B cell (primary cell): ENCODE measurements at regions of chr14 and their contacts with region 1.

Region 1: DNA sequence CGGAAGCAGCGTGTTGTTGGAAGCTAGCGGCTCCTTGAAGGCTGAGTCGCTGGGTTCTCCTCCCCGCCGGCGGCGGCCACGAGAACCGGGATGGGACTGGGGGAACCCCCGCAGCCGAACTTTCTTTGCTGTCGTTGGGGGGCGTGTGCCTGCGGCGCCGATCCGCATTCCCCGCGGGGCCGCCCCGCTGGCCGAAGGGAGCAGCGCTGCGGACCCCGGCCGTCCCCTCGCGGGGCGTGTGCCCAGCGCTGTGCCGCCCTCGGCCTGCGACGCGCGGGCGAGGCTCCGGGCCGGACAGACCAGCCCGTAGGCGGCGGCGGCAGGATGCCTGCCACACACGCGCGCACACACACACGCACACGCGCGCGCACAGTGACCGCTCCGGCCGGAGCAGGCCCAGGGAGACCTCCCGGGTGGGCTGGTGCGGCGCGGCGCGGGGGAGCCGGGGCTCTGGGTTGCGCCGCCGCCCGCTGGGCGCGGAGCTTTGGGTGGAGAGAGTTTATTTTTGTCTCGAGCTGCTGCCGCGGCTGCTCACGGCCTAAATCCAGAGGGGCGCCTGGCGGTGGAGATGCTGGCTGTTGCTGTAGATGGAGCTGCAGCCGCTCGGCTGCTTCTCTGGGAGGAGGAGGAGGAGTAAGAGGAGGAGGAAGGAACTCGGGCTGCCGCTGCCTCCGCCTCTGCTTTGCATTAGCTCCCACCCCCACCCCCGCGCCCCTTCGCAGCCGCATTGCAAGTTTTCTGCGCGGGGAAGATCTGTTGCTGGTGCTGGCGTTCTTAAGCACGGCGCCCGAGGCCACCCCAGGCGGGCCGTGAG is at the start of gene SAMD4A:
- DNase-seq: peak; percentile 85
- ATAC-seq: peak; percentile 35
- H3K4me3 ChIP-seq: peak within 1 kb of the TSS; percentile 52 to 86 (median 73)
- H3K4me3 Mint-ChIP-seq: peak within 1 kb of the TSS; percentile 96
- H3K27ac ChIP-seq: peak within 1 kb of the TSS; percentile 73 to 85
- H3K27ac Mint-ChIP-seq: peak within 1 kb of the TSS; percentile 96
- H3K4me1 ChIP-seq: peaks cover 21 to 24% of the 10 kb centered on the region in 2 donors
- H3K4me1 Mint-ChIP-seq: peaks cover 27% of the 10 kb centered on the region
- H3K27me3 ChIP-seq: no peaks in the 10 kb centered on the region
- H3K27me3 Mint-ChIP-seq: peaks cover 3% of the 10 kb centered on the region
- CTCF ChIP-seq: peak; percentile 10
- total RNA-seq, gene SAMD4A: 12.7 and 13.7 TPM in 2 replicates

Region 2: DNA sequence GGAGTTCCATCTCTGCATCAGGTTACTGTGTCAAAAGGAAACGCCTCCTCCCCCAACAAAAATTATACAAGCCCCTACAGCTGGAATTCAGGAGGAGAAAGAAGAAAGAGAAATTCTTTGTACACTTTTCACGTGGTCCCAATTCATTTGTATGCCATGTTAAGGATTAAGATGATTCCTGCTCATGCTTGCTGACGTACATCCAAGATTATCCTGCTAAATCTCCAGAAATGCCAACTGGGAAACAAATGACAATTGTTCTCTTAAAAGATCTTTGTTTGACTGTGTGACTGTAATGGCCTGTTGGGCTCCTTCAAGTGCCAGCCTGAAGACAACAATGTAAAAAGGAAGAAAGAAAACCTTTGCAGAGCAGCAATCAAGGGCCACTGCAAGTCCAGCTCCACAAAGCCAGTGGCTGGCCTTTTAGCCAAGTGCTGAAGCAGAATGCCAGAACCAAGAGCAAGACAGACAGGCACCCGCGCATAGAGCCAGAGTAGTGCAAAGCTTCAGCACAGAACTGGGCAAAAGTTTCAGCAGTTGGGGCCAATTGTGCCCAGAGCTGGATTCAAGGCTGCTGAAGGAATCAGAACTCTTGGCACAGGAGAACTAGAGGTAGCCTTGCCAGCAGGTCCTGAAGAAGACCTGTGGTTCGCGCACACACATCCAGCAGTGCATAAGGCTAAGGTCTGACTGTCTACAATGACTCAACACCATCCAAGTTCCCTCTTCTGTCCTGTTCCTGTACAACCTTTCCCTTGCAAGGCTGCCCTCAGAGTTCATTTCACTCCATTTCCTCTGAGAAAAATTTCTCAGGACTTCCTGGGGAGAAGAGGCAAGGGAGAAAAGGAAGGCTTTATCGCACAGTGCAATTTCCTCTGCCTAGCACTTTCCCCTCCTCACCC is 400.3 kb before region 1 on chr14:
- CTCF ChIA-PET with region 1: no interaction called
- POLR2A ChIA-PET with region 1: no interaction called
- intact Hi-C with region 1: no loop called
- DNase-seq: no peak
- ATAC-seq: no peak
- H3K4me3 ChIP-seq: no peak overlapping the region
- H3K4me3 Mint-ChIP-seq: no peak overlapping the region
- H3K27ac ChIP-seq: no peak overlapping the region
- H3K27ac Mint-ChIP-seq: no peak overlapping the region
- H3K4me1 ChIP-seq: no peaks in the 10 kb centered on the region
- H3K4me1 Mint-ChIP-seq: no peaks in the 10 kb centered on the region
- H3K27me3 ChIP-seq: peaks cover 0 to 9% (median 0%) of the 10 kb centered on the region in 4 experiments
- H3K27me3 Mint-ChIP-seq: peaks cover 31% of the 10 kb centered on the region
- CTCF ChIP-seq: no peak

Region 3: DNA sequence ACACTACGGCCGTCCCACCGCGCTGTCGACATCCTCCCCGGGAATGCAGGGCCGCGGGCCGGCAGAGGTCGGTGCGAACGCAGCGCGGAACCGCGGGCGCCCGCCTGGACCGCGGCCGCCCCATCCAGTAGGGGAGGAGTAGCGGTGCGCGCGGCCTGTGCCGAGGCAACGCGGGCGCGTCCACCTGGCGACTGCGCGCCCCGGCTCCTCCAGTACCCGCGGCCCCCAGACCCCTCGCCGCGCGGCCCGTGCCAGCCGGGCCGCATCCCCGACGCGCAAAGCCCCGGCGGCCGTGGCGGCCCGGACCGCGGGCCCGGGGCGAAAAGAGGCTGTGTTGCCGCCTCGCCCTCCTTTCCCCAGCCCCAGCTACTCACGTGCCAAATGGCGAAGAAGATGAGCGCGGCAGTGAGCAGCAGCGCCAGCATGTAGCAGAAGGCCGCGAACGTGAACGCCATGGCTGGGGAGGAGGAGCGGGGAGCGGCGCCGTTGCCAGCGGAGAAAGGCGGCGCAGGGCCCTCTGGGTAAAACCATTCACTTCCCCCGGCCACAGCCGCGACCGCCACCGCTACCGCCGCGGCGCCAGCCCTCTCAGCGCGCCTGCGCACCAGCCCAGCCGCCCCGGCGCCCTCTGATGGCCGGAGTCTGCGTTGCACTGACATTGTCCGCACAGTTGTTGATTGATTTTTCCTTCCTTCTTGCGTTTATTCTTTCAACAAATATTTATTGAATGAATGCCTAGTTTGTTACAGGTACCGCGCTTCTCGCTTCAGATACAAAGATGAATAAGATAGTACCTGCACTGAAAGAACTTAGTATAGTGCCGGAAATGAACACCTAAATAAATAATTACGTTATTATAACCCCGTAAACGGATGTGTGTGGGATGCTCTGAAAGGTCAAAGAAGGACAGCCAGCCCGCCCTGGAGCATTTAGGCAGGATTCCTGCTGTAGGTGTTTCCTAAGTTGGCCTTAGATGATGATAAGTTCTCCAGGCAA is 125.4 kb before region 1 on chr14 and contains the start of gene CNIH1:
- CTCF ChIA-PET with region 1: no interaction called
- POLR2A ChIA-PET with region 1: no interaction called
- intact Hi-C with region 1: loop called (anchors 1 kb)
- DNase-seq: peak; percentile 96
- ATAC-seq: peak; percentile 93
- H3K4me3 ChIP-seq: peak within 1 kb of the TSS; percentile 51 to 73 (median 62)
- H3K4me3 Mint-ChIP-seq: peak within 1 kb of the TSS; percentile 90
- H3K27ac ChIP-seq: peak within 1 kb of the TSS; percentile 74 to 82
- H3K27ac Mint-ChIP-seq: peak within 1 kb of the TSS; percentile 90
- H3K4me1 ChIP-seq: peaks cover 26 to 27% of the 10 kb centered on the region in 2 donors
- H3K4me1 Mint-ChIP-seq: peaks cover 46% of the 10 kb centered on the region
- H3K27me3 ChIP-seq: peaks cover 0 to under 1% (median 0%) of the 10 kb centered on the region in 4 experiments
- H3K27me3 Mint-ChIP-seq: peaks cover 3% of the 10 kb centered on the region
- CTCF ChIP-seq: peak; percentile 96
- total RNA-seq, gene CNIH1: 42.8 and 52.0 TPM in 2 replicates

Region 4: DNA sequence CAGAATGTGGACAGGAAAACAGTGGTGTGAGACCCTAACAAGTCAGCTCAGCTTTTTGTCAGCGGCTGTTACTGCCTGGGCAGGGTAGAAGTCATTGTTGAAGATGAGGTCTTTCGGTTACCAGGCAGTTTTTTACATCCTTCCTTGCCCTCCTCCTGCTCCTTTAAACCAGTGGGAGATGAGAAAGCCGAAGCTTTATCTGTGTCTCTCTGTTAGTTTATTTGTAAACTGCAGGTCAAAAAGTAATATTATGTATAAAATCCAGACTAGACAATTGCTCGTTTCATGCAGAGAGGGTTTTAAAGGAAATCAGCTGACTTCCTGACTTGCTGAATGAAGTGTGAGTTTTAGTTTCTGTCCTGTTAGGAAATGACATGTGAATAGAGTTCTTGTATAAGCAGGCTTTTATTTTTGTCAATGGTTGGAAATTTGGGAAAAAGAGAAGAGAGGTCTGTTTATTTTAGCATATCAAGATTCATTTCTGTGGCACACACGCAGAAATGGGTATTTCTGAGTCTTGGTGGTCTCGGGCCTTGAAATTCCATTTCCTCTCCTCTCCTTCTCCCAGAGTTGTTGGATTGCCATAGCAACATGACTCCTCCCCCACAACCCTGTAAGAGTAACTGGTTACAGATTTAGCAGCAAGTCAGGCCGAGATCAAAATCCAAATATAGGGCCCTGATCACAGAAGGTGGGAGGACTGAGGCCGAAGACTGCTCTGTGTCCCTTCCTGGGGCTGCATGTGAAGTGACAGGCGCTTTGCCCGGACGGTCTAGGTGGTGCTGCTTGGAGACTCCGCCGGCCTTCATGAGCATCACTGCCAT is 61.1 kb after region 1 on chr14:
- CTCF ChIA-PET with region 1: interaction called, 13 read pairs
- POLR2A ChIA-PET with region 1: interaction called, 5 read pairs
- intact Hi-C with region 1: loop called (anchors 5 kb)
- DNase-seq: peak; percentile 73
- ATAC-seq: peak; percentile 68
- H3K4me3 ChIP-seq: peak overlapping the region; percentile 22 to 54 (median 42)
- H3K4me3 Mint-ChIP-seq: peak overlapping the region; percentile 86
- H3K27ac ChIP-seq: peak overlapping the region; percentile 72 to 93
- H3K27ac Mint-ChIP-seq: peak overlapping the region; percentile 89
- H3K4me1 ChIP-seq: peaks cover 37 to 43% of the 10 kb centered on the region in 2 donors
- H3K4me1 Mint-ChIP-seq: peaks cover 53% of the 10 kb centered on the region
- H3K27me3 ChIP-seq: no peaks in the 10 kb centered on the region
- H3K27me3 Mint-ChIP-seq: no peaks in the 10 kb centered on the region
- CTCF ChIP-seq: no peak

Region 5: GRCh38 chr14:54691525-54692283 is 125.1 kb after region 1 on chr14:
- CTCF ChIA-PET with region 1: interaction called, 15 read pairs
- POLR2A ChIA-PET with region 1: no interaction called
- intact Hi-C with region 1: loop called (anchors 1 kb)
- DNase-seq: peak; percentile 53
- ATAC-seq: no peak
- H3K4me3 ChIP-seq: no peak overlapping the region
- H3K4me3 Mint-ChIP-seq: no peak overlapping the region
- H3K27ac ChIP-seq: no peak overlapping the region
- H3K27ac Mint-ChIP-seq: no peak overlapping the region
- H3K4me1 ChIP-seq: no peaks in the 10 kb centered on the region
- H3K4me1 Mint-ChIP-seq: peaks cover 2% of the 10 kb centered on the region
- H3K27me3 ChIP-seq: no peaks in the 10 kb centered on the region
- H3K27me3 Mint-ChIP-seq: no peaks in the 10 kb centered on the region
- CTCF ChIP-seq: peak; percentile 52

Region 6: GRCh38 chr14:54749727-54750126 is 183.1 kb after region 1 on chr14:
- CTCF ChIA-PET with region 1: no interaction called
- POLR2A ChIA-PET with region 1: no interaction called
- intact Hi-C with region 1: no loop called
- DNase-seq: no peak
- ATAC-seq: no peak
- H3K4me3 ChIP-seq: no peak overlapping the region
- H3K4me3 Mint-ChIP-seq: no peak overlapping the region
- H3K27ac ChIP-seq: no peak overlapping the region
- H3K27ac Mint-ChIP-seq: no peak overlapping the region
- H3K4me1 ChIP-seq: no peaks in the 10 kb centered on the region
- H3K4me1 Mint-ChIP-seq: no peaks in the 10 kb centered on the region
- H3K27me3 ChIP-seq: no peaks in the 10 kb centered on the region
- H3K27me3 Mint-ChIP-seq: no peaks in the 10 kb centered on the region
- CTCF ChIP-seq: no peak

Region 7: DNA sequence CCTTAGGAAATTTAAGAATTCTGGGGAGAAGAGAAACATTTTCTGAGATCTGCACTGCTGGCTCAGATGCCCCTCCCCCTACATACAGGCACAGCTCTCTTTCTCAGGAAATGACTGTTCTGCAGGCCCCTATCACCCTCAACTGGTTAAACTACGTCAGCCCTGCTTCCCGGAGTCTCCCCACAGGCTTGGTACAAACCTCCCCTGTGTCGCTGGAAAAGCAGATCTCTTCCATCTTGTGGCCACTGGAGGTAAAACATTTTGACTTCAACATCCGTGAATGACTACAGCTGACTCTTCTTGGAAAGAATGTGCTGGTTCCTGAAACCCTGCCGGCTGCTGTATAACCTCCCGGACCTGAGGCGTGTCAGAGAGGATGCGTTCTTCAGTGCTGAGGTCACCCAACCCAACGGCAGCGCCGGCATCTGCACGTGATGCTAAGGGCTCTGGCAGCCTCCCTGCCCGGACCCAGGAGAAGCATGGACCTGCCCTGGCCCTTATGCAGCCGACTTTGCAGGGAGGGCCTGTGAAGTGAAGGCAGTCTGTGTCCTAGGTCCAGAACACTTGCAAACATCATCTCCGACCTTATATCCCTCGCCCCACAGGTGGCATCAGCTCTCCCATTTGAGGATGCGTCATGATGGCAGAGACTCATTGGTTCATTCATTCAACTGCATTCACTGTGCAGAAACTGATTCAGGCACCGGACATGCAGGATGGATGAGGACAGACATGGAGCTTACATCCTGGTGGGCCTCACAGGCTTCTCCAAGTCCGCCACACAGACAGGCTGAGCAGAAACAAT is 206.8 kb after region 1 on chr14:
- CTCF ChIA-PET with region 1: interaction called, 231 read pairs
- POLR2A ChIA-PET with region 1: interaction called, 13 read pairs
- intact Hi-C with region 1: loop called (anchors 1 kb)
- DNase-seq: peak; percentile 66
- ATAC-seq: peak; percentile 7
- H3K4me3 ChIP-seq: no peak overlapping the region
- H3K4me3 Mint-ChIP-seq: no peak overlapping the region
- H3K27ac ChIP-seq: peak overlapping the region in 1 of 2 donors; percentile 28
- H3K27ac Mint-ChIP-seq: peak overlapping the region; percentile 47
- H3K4me1 ChIP-seq: peaks cover 42% of the 10 kb centered on the region in 2 donors
- H3K4me1 Mint-ChIP-seq: peaks cover 35% of the 10 kb centered on the region
- H3K27me3 ChIP-seq: no peaks in the 10 kb centered on the region
- H3K27me3 Mint-ChIP-seq: no peaks in the 10 kb centered on the region
- CTCF ChIP-seq: no peak

Region 8: DNA sequence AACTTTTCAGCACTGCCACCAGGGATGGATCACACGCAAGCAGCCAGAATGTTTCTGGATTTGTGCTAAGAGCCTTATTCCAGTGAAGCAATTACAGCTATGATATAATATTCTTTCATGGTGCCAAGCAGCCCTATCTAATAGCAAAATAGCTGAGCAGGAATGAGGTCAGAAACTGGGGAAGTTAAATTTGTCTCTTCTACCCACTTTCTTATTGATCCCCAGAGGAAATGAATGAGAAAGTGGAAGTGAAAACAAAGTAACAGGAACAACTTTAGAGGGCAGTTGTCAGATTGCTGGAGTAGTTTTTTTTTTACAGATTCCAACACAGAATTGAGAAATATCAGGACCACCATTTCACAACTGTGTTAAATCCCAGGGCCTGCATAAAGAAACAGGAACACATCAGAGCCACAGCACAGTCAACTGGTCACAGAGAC is 291.2 kb after region 1 on chr14:
- CTCF ChIA-PET with region 1: no interaction called
- POLR2A ChIA-PET with region 1: no interaction called
- intact Hi-C with region 1: no loop called
- DNase-seq: peak; percentile 65
- ATAC-seq: peak; percentile 85
- H3K4me3 ChIP-seq: no peak overlapping the region
- H3K4me3 Mint-ChIP-seq: peak overlapping the region; percentile 26
- H3K27ac ChIP-seq: peak overlapping the region; percentile 2 to 64
- H3K27ac Mint-ChIP-seq: peak overlapping the region; percentile 54
- H3K4me1 ChIP-seq: peaks cover 40 to 42% of the 10 kb centered on the region in 2 donors
- H3K4me1 Mint-ChIP-seq: peaks cover 38% of the 10 kb centered on the region
- H3K27me3 ChIP-seq: no peaks in the 10 kb centered on the region
- H3K27me3 Mint-ChIP-seq: no peaks in the 10 kb centered on the region
- CTCF ChIP-seq: no peak

Region 9: DNA sequence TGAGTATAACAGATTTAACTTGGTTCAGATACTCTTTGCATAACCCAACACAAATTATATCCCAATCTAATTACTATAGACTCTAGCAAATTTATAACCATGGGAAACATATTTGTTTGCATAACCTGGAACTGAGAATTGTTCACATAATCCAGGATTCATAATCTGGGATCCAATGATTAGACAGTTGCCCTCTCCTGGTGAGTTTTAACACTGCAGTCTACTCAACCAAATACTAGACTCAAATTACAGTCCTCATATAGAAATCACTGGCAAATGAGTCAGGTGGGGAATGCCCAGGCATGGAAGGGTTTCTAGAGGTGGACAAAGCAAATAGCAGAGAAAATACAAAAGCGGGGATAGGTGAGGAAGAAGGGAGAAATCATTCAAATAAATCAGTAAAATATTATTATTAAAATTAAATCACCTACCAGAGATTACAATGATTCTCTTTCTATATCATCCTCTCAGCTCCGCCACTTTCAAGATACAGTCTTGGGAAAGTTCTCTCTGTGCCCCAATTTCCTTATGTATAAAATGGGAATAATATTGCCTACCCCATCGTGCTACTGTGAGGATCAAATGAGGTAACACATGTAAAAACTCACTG is 326.6 kb after region 1 on chr14:
- CTCF ChIA-PET with region 1: interaction called, 11 read pairs
- POLR2A ChIA-PET with region 1: no interaction called
- intact Hi-C with region 1: no loop called
- DNase-seq: peak; percentile 60
- ATAC-seq: peak; percentile 75
- H3K4me3 ChIP-seq: no peak overlapping the region
- H3K4me3 Mint-ChIP-seq: no peak overlapping the region
- H3K27ac ChIP-seq: no peak overlapping the region
- H3K27ac Mint-ChIP-seq: no peak overlapping the region
- H3K4me1 ChIP-seq: peaks cover 5 to 10% of the 10 kb centered on the region in 2 donors
- H3K4me1 Mint-ChIP-seq: peaks cover 29% of the 10 kb centered on the region
- H3K27me3 ChIP-seq: no peaks in the 10 kb centered on the region
- H3K27me3 Mint-ChIP-seq: no peaks in the 10 kb centered on the region
- CTCF ChIP-seq: peak; percentile 89

Region 10: DNA sequence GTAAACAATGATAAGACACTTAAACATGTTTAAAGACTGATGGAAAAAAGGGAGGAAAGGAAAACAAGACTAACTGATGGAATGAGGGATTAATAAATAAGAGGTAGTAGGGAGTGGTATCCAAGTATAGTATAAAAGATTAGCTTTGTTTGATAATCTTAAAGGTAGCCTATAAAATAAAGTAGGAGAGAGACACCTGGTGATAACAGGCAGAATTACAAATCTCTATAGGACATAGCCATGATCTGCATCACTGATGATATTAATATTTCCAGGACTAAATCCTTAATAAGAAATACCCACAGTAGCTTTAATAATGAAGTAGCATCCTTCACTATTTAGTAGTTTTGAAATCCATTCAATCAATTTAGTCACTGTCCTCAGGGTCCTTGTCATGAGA is 594.4 kb after region 1 on chr14:
- CTCF ChIA-PET with region 1: interaction called, 4 read pairs
- POLR2A ChIA-PET with region 1: no interaction called
- intact Hi-C with region 1: loop called (anchors 10 kb)
- DNase-seq: peak; percentile 60
- ATAC-seq: peak; percentile 85
- H3K4me3 ChIP-seq: no peak overlapping the region
- H3K4me3 Mint-ChIP-seq: no peak overlapping the region
- H3K27ac ChIP-seq: no peak overlapping the region
- H3K27ac Mint-ChIP-seq: no peak overlapping the region
- H3K4me1 ChIP-seq: no peaks in the 10 kb centered on the region
- H3K4me1 Mint-ChIP-seq: peaks cover 2% of the 10 kb centered on the region
- H3K27me3 ChIP-seq: no peaks in the 10 kb centered on the region
- H3K27me3 Mint-ChIP-seq: no peaks in the 10 kb centered on the region
- CTCF ChIP-seq: peak; percentile 74